CD8-positive, alpha-beta memory T cell (primary cell): ENCODE measurements at regions of chr1 and their contacts with region 1.

Region 1: GRCh38 chr1:244864253-244865027 is at the start of gene HNRNPU:
- DNase-seq: peak; percentile 93 to 99 (median 97)
- H3K4me3 ChIP-seq: peak within 1 kb of the TSS; percentile 87
- H3K4me3 Mint-ChIP-seq: peak within 1 kb of the TSS; percentile 90 to 98 (median 93)
- H3K27ac ChIP-seq: peak within 1 kb of the TSS; percentile 94
- H3K27ac Mint-ChIP-seq: peak within 1 kb of the TSS; percentile 91 to 100 (median 98)
- H3K4me1 ChIP-seq: peaks cover 45% of the 10 kb centered on the region
- H3K4me1 Mint-ChIP-seq: peaks cover 34 to 52% (median 48%) of the 10 kb centered on the region in 3 donors
- H3K27me3 ChIP-seq: no peaks in the 10 kb centered on the region
- H3K27me3 Mint-ChIP-seq: peaks cover 0 to 10% of the 10 kb centered on the region in 2 donors
- total RNA-seq, gene HNRNPU: 598 to 630 TPM

Region 2: GRCh38 chr1:244652699-244653466 is 211.6 kb before region 1 on chr1 and contains the start of gene DESI2:
- CTCF ChIA-PET with region 1: no interaction called
- POLR2A ChIA-PET with region 1: interaction called, 13 read pairs
- DNase-seq: peak; percentile 96 to 99 (median 98)
- H3K4me3 ChIP-seq: peak within 1 kb of the TSS; percentile 72
- H3K4me3 Mint-ChIP-seq: peak within 1 kb of the TSS in 6 of 7 donors; percentile 82 to 89 (median 86)
- H3K27ac ChIP-seq: peak within 1 kb of the TSS; percentile 82
- H3K27ac Mint-ChIP-seq: peak within 1 kb of the TSS; percentile 64 to 93 (median 92)
- H3K4me1 ChIP-seq: peaks cover 31% of the 10 kb centered on the region
- H3K4me1 Mint-ChIP-seq: peaks cover 20 to 23% (median 21%) of the 10 kb centered on the region in 3 donors
- H3K27me3 ChIP-seq: no peaks in the 10 kb centered on the region
- H3K27me3 Mint-ChIP-seq: peaks cover 0 to under 1% of the 10 kb centered on the region in 2 donors
- total RNA-seq, gene DESI2: 32.9 to 33.7 TPM

Region 3: GRCh38 chr1:244918421-244919319 is 54.2 kb after region 1 on chr1:
- CTCF ChIA-PET with region 1: interaction called, 3 read pairs
- POLR2A ChIA-PET with region 1: interaction called, 10 read pairs
- DNase-seq: peak; percentile 54 to 85 (median 76)
- H3K4me3 ChIP-seq: peak overlapping the region; percentile 63
- H3K4me3 Mint-ChIP-seq: peak overlapping the region; percentile 81 to 91 (median 89)
- H3K27ac ChIP-seq: no peak overlapping the region
- H3K27ac Mint-ChIP-seq: peak overlapping the region in 6 of 8 donors; percentile 22 to 85 (median 78)
- H3K4me1 ChIP-seq: peaks cover 5% of the 10 kb centered on the region
- H3K4me1 Mint-ChIP-seq: peaks cover 10 to 13% (median 12%) of the 10 kb centered on the region in 3 donors
- H3K27me3 ChIP-seq: no peaks in the 10 kb centered on the region
- H3K27me3 Mint-ChIP-seq: peaks cover 0 to 4% of the 10 kb centered on the region in 2 donors

Region 4: GRCh38 chr1:244970661-244971551 is 106.5 kb after region 1 on chr1:
- CTCF ChIA-PET with region 1: interaction called, 20 read pairs
- POLR2A ChIA-PET with region 1: interaction called, 205 read pairs
- DNase-seq: peak; percentile 86 to 96 (median 95)
- H3K4me3 ChIP-seq: peak overlapping the region; percentile 69
- H3K4me3 Mint-ChIP-seq: peak overlapping the region; percentile 91 to 98 (median 93)
- H3K27ac ChIP-seq: peak overlapping the region; percentile 99
- H3K27ac Mint-ChIP-seq: peak overlapping the region; percentile 96 to 100 (median 98)
- H3K4me1 ChIP-seq: peaks cover 12% of the 10 kb centered on the region
- H3K4me1 Mint-ChIP-seq: peaks cover 16 to 29% (median 19%) of the 10 kb centered on the region in 3 donors
- H3K27me3 ChIP-seq: no peaks in the 10 kb centered on the region
- H3K27me3 Mint-ChIP-seq: no peaks in the 10 kb centered on the region

Region 5: GRCh38 chr1:245031041-245031440 is 166.6 kb after region 1 on chr1:
- CTCF ChIA-PET with region 1: no interaction called
- POLR2A ChIA-PET with region 1: interaction called, 10 read pairs
- DNase-seq: no peak
- H3K4me3 ChIP-seq: no peak overlapping the region
- H3K4me3 Mint-ChIP-seq: no peak overlapping the region
- H3K27ac ChIP-seq: no peak overlapping the region
- H3K27ac Mint-ChIP-seq: no peak overlapping the region
- H3K4me1 ChIP-seq: no peaks in the 10 kb centered on the region
- H3K4me1 Mint-ChIP-seq: peaks cover 9 to 17% (median 13%) of the 10 kb centered on the region in 3 donors
- H3K27me3 ChIP-seq: no peaks in the 10 kb centered on the region
- H3K27me3 Mint-ChIP-seq: no peaks in the 10 kb centered on the region